Activated T-helper 2 cell treated with anti-CD3 and anti-CD28 coated beads, Interferon-gamma antibody, Interleukin-2, Interleukin-4, amounts not matched to agents 10 μg/mL and 5 μg/mL and 100 μg/mL, durations not matched to agents 14 hours and 24 hours and 36 hours (primary cell): ENCODE measurements at regions of chr12 and their contacts with region 1.

Region 1: DNA sequence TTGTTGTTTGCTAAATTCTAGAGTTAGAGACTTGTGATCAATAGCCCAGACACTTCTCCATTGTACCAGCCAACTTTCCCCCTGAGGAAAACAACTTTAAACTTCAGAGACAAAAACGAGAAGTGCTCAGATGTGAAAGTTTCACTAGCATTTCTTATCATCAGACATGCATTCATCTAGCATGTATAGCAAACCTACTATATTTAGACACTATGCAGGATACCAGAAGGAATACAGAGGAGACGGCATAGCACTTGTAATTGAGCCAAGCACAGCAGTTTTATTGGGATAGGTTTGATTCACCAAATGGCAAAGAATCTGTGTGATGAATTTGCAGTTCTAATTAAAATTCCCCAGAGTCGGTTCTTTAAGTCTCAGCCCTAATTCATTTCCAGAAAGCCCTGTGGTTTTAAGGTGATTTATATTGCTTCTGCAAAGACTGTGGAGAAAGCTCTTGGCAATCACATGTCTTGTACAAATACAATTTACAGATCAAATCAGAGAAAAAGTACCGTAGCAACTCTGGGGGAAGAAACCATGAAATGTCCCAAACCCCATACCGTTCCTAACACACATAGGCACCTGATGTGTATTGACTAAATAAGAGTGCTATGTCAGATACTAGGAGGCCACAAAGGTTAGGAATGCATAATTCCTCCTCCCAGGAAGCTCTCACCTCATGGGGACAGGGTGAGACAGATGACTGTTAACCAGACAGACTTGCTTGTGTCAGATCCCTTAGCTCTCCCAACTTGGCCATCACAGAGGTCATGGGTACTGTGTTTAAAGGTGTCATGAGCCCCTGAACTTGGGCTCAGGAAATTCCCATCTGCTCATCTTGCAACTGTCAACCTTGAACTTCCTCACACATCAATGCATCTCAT is 69.6 kb upstream of the KRAS start:
- DNase-seq: no peak
- H3K4me3 Mint-ChIP-seq: no peak overlapping the region
- H3K27ac Mint-ChIP-seq: peak overlapping the region; percentile 56
- H3K4me1 Mint-ChIP-seq: peaks cover 46% of the 10 kb centered on the region
- H3K27me3 Mint-ChIP-seq: peaks cover 17% of the 10 kb centered on the region

Region 2: GRCh38 chr12:25195056-25195971 is 125.1 kb before region 1 on chr12 and contains the starts of genes DNAI7 and ETFRF1:
- intact Hi-C with region 1: loop called (anchors 5 kb)
- DNase-seq: peak; percentile 92
- H3K4me3 Mint-ChIP-seq: peak within 1 kb of the TSS; percentile 94
- H3K27ac Mint-ChIP-seq: peak within 1 kb of the TSS; percentile 94
- H3K4me1 Mint-ChIP-seq: peaks cover 22% of the 10 kb centered on the region
- H3K27me3 Mint-ChIP-seq: peaks cover 3% of the 10 kb centered on the region
- total RNA-seq, gene DNAI7: not detected in 2 replicates
- total RNA-seq, gene ETFRF1: 7.6 and 9.8 TPM in 2 replicates

Region 3: GRCh38 chr12:25250744-25251730 is 69.3 kb before region 1 on chr12 and contains the start of gene KRAS:
- intact Hi-C with region 1: loop called (anchors 1 kb)
- DNase-seq: peak; percentile 88
- H3K4me3 Mint-ChIP-seq: peak within 1 kb of the TSS; percentile 90
- H3K27ac Mint-ChIP-seq: peak within 1 kb of the TSS; percentile 93
- H3K4me1 Mint-ChIP-seq: peaks cover 22% of the 10 kb centered on the region
- H3K27me3 Mint-ChIP-seq: peaks cover 16% of the 10 kb centered on the region
- total RNA-seq, gene KRAS: 25.2 TPM in 2 replicates

Region 4: GRCh38 chr12:25269701-25270100 is 50.7 kb before region 1 on chr12:
- intact Hi-C with region 1: no loop called
- DNase-seq: no peak
- H3K4me3 Mint-ChIP-seq: no peak overlapping the region
- H3K27ac Mint-ChIP-seq: no peak overlapping the region
- H3K4me1 Mint-ChIP-seq: peaks cover 5% of the 10 kb centered on the region
- H3K27me3 Mint-ChIP-seq: peaks cover 9% of the 10 kb centered on the region

Region 5: GRCh38 chr12:25364529-25365339 is 44.4 kb after region 1 on chr12:
- intact Hi-C with region 1: loop called (anchors 1 kb)
- DNase-seq: no peak
- H3K4me3 Mint-ChIP-seq: peak overlapping the region; percentile 61
- H3K27ac Mint-ChIP-seq: peak overlapping the region; percentile 88
- H3K4me1 Mint-ChIP-seq: peaks cover 31% of the 10 kb centered on the region
- H3K27me3 Mint-ChIP-seq: peaks cover 4% of the 10 kb centered on the region

Region 6: GRCh38 chr12:25377469-25378177 is 57.3 kb after region 1 on chr12:
- intact Hi-C with region 1: loop called (anchors 2 kb)
- DNase-seq: peak; percentile 35
- H3K4me3 Mint-ChIP-seq: peak overlapping the region; percentile 43
- H3K27ac Mint-ChIP-seq: peak overlapping the region; percentile 70
- H3K4me1 Mint-ChIP-seq: peaks cover 70% of the 10 kb centered on the region
- H3K27me3 Mint-ChIP-seq: no peaks in the 10 kb centered on the region

Region 7: DNA sequence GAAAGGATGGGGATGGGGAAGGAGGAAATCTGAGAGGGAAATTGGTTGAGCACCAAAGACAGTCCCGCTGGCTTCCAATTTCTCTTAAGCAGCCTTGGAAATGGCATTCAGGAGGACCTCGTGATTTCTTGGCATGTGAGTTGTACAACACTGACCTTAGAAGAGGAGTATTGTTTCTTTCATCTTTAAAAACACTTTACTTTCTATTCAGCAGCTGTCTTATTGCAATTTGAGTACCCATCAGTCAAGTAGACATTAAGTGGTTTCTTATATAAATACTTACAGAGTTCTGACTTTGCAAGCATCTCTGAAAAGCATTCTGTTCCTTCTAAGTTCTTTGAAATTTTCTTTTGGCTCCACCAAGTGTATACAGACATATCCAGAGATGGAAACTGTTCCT is 149.5 kb after region 1 on chr12:
- intact Hi-C with region 1: no loop called
- DNase-seq: no peak
- H3K4me3 Mint-ChIP-seq: no peak overlapping the region
- H3K27ac Mint-ChIP-seq: no peak overlapping the region
- H3K4me1 Mint-ChIP-seq: no peaks in the 10 kb centered on the region
- H3K27me3 Mint-ChIP-seq: no peaks in the 10 kb centered on the region